Head of caudate nucleus (tissue), 42 donors: ENCODE measurements at regions of chr1 and their contacts with region 1.

Region 1: DNA sequence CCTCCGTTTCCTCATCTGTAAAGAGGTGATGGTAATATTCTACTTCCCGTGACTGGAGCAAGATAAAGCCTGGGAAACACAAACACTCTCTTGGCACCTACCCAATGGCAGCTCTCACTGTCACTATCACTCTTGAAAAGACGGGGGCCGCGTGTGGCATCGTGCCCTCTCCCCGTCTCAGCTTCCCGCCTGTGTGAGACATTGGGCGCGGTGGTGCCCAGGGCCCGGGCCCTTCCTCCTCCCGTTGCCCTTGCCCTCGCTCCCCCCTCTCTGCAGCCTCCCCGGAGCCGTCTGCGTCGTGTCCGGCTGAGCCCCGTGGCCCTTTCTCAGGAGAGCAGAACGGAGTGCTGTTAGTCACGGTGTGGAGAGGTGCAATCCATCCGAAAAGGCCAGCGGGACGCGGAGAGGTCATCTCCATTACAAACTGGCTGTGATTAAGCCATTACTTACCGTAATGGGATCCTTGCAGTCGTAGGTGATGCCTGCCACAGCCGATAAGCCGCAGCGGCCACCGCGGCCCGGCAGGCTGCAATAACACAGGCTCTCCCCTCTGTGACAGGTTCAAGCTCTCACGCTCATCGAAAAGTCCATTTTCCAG is 156.4 kb upstream of the ZC3H12A start:
- DNase-seq: no peak

Region 2: DNA sequence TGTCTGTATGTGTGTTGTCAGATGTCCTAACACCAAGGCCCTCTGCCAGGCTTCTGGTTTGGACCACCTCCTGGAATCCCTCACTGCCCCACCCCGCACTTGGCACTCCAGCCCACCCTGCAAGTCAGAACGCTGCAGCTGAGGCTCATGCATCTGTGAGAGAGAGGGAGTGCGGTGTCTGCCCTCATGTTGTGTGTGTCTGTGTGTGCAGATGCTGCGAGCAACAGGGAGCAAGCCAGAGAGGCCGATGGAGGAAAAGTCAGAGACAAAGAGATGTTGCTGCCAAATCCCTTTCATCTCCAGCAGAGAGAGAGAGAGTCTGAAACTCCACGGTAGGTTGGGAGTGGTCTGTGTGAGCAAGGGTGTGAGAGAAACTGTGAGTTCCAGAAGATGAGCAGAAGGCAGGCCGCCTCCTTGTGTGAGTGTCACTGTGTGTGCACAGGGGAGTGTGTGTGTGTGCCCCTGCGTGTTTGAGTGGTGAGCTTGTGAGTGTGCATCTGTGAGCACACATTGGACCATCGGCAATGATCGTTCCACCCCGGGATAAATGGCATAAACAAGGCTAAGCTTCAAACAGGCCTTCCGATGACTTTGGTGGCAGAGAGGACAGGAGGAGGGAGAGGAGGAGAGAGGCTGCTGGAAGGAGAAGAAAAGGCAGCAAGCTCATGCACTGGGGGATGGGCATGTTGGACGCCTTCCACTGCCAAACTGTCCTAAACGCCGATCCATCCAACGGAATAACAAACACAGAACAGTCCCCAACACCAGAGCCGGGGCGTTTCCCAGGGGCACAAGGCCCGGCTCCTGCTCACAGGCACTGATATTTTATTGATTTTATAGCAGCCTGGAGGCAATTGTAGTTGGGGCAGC is 184.5 kb before region 1 on chr1:
- intact Hi-C with region 1: loop called (anchors 10 kb)
- DNase-seq: peak in 23 of 42 donors; percentile 23 to 82 (median 53)